ENCODE measurements at regions of chr16 and their contacts with region 1.

Region 1: GRCh38 chr16:84062734-84063640 is 20.4 kb upstream of the SLC38A8 start:
- DNase-seq: peak; percentile 82
- ATAC-seq: peak; percentile 92
- H3K4me3 Mint-ChIP-seq: no peak overlapping the region
- H3K27ac Mint-ChIP-seq: peak overlapping the region; percentile 64
- H3K4me1 Mint-ChIP-seq: peaks cover 8% of the 10 kb centered on the region
- H3K27me3 Mint-ChIP-seq: no peaks in the 10 kb centered on the region
- CTCF ChIP-seq: peak; percentile 88

Region 2: GRCh38 chr16:83826146-83826913 is 236.7 kb before region 1 on chr16:
- CTCF ChIA-PET with region 1: interaction called, 17 read pairs
- POLR2A ChIA-PET with region 1: no interaction called
- intact Hi-C with region 1: no loop called
- DNase-seq: peak; percentile 89
- ATAC-seq: peak; percentile 94
- H3K4me3 Mint-ChIP-seq: no peak overlapping the region
- H3K27ac Mint-ChIP-seq: no peak overlapping the region
- H3K4me1 Mint-ChIP-seq: peaks cover 2% of the 10 kb centered on the region
- H3K27me3 Mint-ChIP-seq: peaks cover 2% of the 10 kb centered on the region
- CTCF ChIP-seq: peak; percentile 86

Region 3: GRCh38 chr16:83863682-83864081 is 199.3 kb before region 1 on chr16:
- CTCF ChIA-PET with region 1: no interaction called
- POLR2A ChIA-PET with region 1: no interaction called
- intact Hi-C with region 1: no loop called
- DNase-seq: no peak
- ATAC-seq: no peak
- H3K4me3 Mint-ChIP-seq: no peak overlapping the region
- H3K27ac Mint-ChIP-seq: no peak overlapping the region
- H3K4me1 Mint-ChIP-seq: no peaks in the 10 kb centered on the region
- H3K27me3 Mint-ChIP-seq: peaks cover 22% of the 10 kb centered on the region
- CTCF ChIP-seq: no peak

Region 4: GRCh38 chr16:83952940-83953795 is 109.8 kb before region 1 on chr16 and contains the start of gene OSGIN1:
- CTCF ChIA-PET with region 1: interaction called, 85 read pairs
- POLR2A ChIA-PET with region 1: interaction called, 3 read pairs
- intact Hi-C with region 1: loop called (anchors 5 kb)
- DNase-seq: peak; percentile 94
- ATAC-seq: peak; percentile 94
- H3K4me3 Mint-ChIP-seq: no peak within 1 kb of the TSS
- H3K27ac Mint-ChIP-seq: peak within 1 kb of the TSS; percentile 11
- H3K4me1 Mint-ChIP-seq: peaks cover 8% of the 10 kb centered on the region
- H3K27me3 Mint-ChIP-seq: peaks cover 17% of the 10 kb centered on the region
- CTCF ChIP-seq: no peak
- total RNA-seq, gene OSGIN1: 0.56 to 0.67 TPM

Region 5: GRCh38 chr16:83971165-83972130 is 91.5 kb before region 1 on chr16:
- CTCF ChIA-PET with region 1: interaction called, 15 read pairs
- POLR2A ChIA-PET with region 1: no interaction called
- intact Hi-C with region 1: no loop called
- DNase-seq: no peak
- ATAC-seq: no peak
- H3K4me3 Mint-ChIP-seq: no peak overlapping the region
- H3K27ac Mint-ChIP-seq: no peak overlapping the region
- H3K4me1 Mint-ChIP-seq: peaks cover 5% of the 10 kb centered on the region
- H3K27me3 Mint-ChIP-seq: peaks cover 13% of the 10 kb centered on the region
- CTCF ChIP-seq: no peak

Region 6: DNA sequence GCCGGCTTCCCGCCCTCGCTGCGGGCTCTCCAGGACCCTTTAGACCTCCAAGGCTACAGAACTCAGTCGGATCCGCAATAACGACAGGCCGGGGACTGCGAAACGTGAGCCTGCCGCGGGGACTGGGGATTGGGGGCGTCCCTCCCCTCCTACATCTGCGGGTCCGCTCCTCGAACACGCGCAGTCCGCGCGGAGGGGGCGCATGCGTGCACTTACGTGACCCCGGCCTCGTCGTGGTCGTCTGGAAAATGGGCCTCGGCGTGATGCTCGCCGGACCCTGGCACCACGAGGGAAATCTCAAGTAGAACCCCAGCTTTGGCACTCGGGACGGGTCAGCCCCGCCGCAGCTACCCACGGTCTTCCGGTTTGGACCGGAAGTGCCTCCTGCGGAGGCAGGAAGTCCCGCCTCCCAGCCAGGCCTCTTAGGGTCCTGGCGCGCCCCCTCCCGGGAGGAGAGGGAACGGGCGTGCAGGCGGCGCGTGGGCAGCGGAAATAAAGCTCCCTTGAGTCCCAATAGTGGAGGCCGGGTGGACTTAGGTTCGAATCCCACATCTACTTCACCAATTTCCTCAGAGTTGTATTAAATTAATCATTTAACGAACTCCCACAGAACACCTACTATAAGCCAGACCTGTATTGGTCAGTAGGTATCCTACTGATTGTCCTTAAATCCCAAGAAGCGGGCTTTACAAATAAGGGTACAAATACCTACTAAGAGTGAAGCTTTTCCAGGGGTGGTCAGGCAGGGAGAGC is 123.9 kb after region 1 on chr16 and contains the start of gene TAF1C:
- CTCF ChIA-PET with region 1: interaction called, 11 read pairs
- POLR2A ChIA-PET with region 1: no interaction called
- intact Hi-C with region 1: no loop called
- DNase-seq: peak; percentile 97
- ATAC-seq: peak; percentile 98
- H3K4me3 Mint-ChIP-seq: peak within 1 kb of the TSS; percentile 94
- H3K27ac Mint-ChIP-seq: peak within 1 kb of the TSS; percentile 95
- H3K4me1 Mint-ChIP-seq: peaks cover 14% of the 10 kb centered on the region
- H3K27me3 Mint-ChIP-seq: no peaks in the 10 kb centered on the region
- CTCF ChIP-seq: peak; percentile 86
- total RNA-seq, gene TAF1C: 59.3 to 62.6 TPM